Activated CD8-positive, alpha-beta T cell treated with anti-CD3 and anti-CD28 coated beads, Interleukin-2, amount 10 ng/mL, durations not matched to agents 7 days and 5 days (primary cell): ENCODE measurements at regions of chr12 and their contacts with region 1.

Region 1: GRCh38 chr12:92398565-92399309 is 253.1 kb upstream of the BTG1 start:
- DNase-seq: peak; percentile 38
- ATAC-seq: peak; percentile 83
- H3K4me3 Mint-ChIP-seq: peak overlapping the region; percentile 57
- H3K27ac Mint-ChIP-seq: peak overlapping the region; percentile 88
- H3K4me1 Mint-ChIP-seq: peaks cover 85% of the 10 kb centered on the region
- H3K27me3 Mint-ChIP-seq: no peaks in the 10 kb centered on the region

Region 2: GRCh38 chr12:92363295-92364146 is 35.2 kb before region 1 on chr12:
- CTCF ChIA-PET with region 1: interaction called, 13 read pairs
- POLR2A ChIA-PET with region 1: interaction called, 25 read pairs
- DNase-seq: peak; percentile 52
- ATAC-seq: peak; percentile 78
- H3K4me3 Mint-ChIP-seq: peak overlapping the region; percentile 72
- H3K27ac Mint-ChIP-seq: peak overlapping the region; percentile 84
- H3K4me1 Mint-ChIP-seq: peaks cover 48% of the 10 kb centered on the region
- H3K27me3 Mint-ChIP-seq: no peaks in the 10 kb centered on the region